ENCODE measurements at regions of chr12 and their contacts with region 1.

Region 1: GRCh38 chr12:55715833-55716581 is at the start of gene BLOC1S1:
- DNase-seq: peak; percentile 92
- H3K4me3 Mint-ChIP-seq: peak within 1 kb of the TSS; percentile 80
- H3K27ac Mint-ChIP-seq: peak within 1 kb of the TSS; percentile 79
- H3K4me1 Mint-ChIP-seq: peaks cover 31% of the 10 kb centered on the region
- H3K27me3 Mint-ChIP-seq: no peaks in the 10 kb centered on the region
- CTCF ChIP-seq: no peak
- total RNA-seq, gene BLOC1S1: 75.8 and 84.3 TPM in 2 replicates

Region 2: DNA sequence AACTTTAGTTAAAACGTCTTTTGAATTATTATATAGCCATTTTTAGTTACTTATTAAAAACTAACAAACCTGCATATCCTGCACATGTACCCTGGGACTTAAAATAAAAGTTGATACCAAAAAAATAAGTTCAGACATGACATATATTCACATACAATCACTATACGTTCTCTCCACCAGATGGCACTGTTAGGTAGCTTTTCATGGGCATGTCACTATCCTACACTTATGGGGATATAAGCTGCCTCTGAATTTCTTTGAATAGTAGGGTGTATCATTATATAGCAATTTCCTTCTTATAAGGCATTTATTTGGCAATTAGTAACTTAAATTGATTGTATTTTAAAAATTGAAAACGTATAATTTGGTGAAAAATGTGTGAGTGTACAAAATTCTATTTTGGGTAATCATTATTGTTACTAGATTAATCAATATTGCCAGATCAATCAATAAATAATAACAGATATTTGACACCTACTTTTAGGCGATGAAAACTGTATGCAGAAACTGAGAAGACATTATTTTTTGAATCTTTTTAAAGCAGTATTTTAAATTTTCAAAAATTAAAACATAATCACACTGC is 526.9 kb before region 1 on chr12:
- CTCF ChIA-PET with region 1: interaction called, 4 read pairs
- POLR2A ChIA-PET with region 1: no interaction called
- intact Hi-C with region 1: loop called (anchors 1 kb)
- DNase-seq: peak; percentile 79
- H3K4me3 Mint-ChIP-seq: no peak overlapping the region
- H3K27ac Mint-ChIP-seq: no peak overlapping the region
- H3K4me1 Mint-ChIP-seq: no peaks in the 10 kb centered on the region
- H3K27me3 Mint-ChIP-seq: peaks cover 71% of the 10 kb centered on the region
- CTCF ChIP-seq: peak; percentile 47

Region 3: DNA sequence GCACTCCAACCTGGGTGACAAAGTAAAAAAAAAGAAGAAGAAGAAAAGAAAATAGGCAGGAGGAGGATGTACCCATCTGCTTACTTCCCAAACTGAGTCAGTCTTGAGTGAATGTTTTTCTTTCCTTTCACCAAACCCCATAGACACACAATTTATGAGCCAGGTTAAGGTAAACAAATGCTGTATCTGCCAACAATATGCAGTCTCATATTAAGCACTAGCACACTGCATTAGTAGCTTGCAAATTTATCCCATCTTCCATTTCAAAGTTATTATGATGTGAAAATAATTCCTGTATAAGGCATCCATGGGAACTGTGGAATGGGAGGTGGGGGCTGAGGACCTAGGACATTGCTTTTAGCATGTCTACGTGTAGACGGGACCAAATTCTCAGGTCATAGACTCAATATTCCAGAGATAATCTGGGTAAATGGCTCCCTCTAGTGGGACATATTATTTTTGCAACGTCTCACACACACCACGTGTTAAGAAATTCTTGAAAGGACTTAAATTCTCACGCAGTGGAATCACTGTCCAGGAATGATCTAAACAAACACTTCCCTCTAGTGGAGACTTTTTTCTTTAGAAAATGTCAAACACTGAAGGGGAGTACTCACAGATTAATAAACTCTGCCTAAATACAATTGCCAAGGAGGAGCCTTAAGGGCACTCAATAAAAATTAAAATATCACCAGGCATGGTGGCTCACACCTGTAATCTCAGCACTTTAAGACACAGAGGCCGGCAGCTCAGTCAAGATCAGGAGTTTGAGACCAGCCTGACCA is 96.5 kb before region 1 on chr12:
- CTCF ChIA-PET with region 1: interaction called, 4 read pairs
- POLR2A ChIA-PET with region 1: interaction called, 3 read pairs
- intact Hi-C with region 1: loop called (anchors 2 kb)
- DNase-seq: peak; percentile 92
- H3K4me3 Mint-ChIP-seq: no peak overlapping the region
- H3K27ac Mint-ChIP-seq: no peak overlapping the region
- H3K4me1 Mint-ChIP-seq: no peaks in the 10 kb centered on the region
- H3K27me3 Mint-ChIP-seq: peaks cover 79% of the 10 kb centered on the region
- CTCF ChIP-seq: peak; percentile 69

Region 4: GRCh38 chr12:55642669-55643068 is 73.3 kb before region 1 on chr12:
- CTCF ChIA-PET with region 1: no interaction called
- POLR2A ChIA-PET with region 1: interaction called, 3 read pairs
- intact Hi-C with region 1: loop called (anchors 1 kb)
- DNase-seq: no peak
- H3K4me3 Mint-ChIP-seq: no peak overlapping the region
- H3K27ac Mint-ChIP-seq: no peak overlapping the region
- H3K4me1 Mint-ChIP-seq: no peaks in the 10 kb centered on the region
- H3K27me3 Mint-ChIP-seq: peaks cover 28% of the 10 kb centered on the region
- CTCF ChIP-seq: no peak

Region 5: GRCh38 chr12:55659486-55660385 is 56.3 kb before region 1 on chr12:
- CTCF ChIA-PET with region 1: interaction called, 4 read pairs
- POLR2A ChIA-PET with region 1: interaction called, 3 read pairs
- intact Hi-C with region 1: loop called (anchors 1 kb)
- DNase-seq: peak; percentile 30
- H3K4me3 Mint-ChIP-seq: no peak overlapping the region
- H3K27ac Mint-ChIP-seq: no peak overlapping the region
- H3K4me1 Mint-ChIP-seq: no peaks in the 10 kb centered on the region
- H3K27me3 Mint-ChIP-seq: peaks cover 43% of the 10 kb centered on the region
- CTCF ChIP-seq: peak; percentile 39

Region 6: GRCh38 chr12:55681142-55682077 is 34.6 kb before region 1 on chr12:
- CTCF ChIA-PET with region 1: interaction called, 3 read pairs
- POLR2A ChIA-PET with region 1: interaction called, 3 read pairs
- intact Hi-C with region 1: loop called (anchors 1 kb)
- DNase-seq: peak; percentile 75
- H3K4me3 Mint-ChIP-seq: no peak overlapping the region
- H3K27ac Mint-ChIP-seq: no peak overlapping the region
- H3K4me1 Mint-ChIP-seq: peaks cover 9% of the 10 kb centered on the region
- H3K27me3 Mint-ChIP-seq: peaks cover 25% of the 10 kb centered on the region
- CTCF ChIP-seq: peak; percentile 37

Region 7: DNA sequence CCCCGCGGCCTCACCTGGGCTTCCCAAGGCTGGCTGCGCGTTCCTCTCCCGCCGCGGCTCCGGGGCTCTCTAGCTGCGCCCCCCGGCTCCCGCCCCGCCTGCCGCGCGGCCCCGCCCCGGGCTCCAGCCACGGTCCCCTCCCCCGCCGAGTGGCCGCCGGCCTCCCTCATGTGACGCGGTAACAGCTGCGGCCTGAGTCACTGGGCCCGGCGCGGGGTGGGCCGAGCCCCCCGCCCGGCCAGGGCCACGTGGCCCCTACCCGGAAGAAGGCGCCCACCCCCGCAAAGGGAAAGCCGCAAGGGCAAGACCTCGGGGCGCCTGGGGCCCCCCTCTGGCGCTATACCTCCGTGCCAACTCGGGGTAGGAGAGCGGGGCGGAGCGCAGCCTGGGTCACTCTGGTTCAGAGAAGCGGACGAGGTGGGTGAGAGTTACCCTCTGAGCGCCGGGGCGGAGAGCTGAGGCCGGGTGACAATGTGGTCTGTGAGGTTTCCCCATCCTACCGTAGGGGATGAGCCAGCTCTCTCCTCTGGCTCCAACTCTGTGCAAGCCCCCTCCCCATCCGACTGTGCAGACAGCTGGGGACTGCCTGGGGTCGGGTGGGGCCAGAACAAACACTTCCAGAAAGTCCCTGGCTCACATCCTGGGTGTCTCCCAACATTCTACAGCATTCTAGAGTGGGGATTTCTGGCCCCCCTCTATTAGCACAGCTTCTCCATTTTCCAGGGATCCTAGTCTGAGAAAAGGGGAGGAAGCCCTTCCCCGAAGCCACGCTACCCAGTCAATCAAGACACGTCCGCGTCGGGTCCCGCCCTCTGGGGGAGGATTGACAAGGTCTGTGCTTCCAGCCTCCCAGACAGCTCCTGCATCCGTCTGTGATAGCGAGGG is 13.2 kb after region 1 on chr12 and contains the start of gene CD63:
- CTCF ChIA-PET with region 1: interaction called, 5 read pairs
- POLR2A ChIA-PET with region 1: interaction called, 25 read pairs
- intact Hi-C with region 1: no loop called
- DNase-seq: peak; percentile 93
- H3K4me3 Mint-ChIP-seq: peak within 1 kb of the TSS; percentile 76
- H3K27ac Mint-ChIP-seq: peak within 1 kb of the TSS; percentile 82
- H3K4me1 Mint-ChIP-seq: peaks cover 22% of the 10 kb centered on the region
- H3K27me3 Mint-ChIP-seq: no peaks in the 10 kb centered on the region
- CTCF ChIP-seq: no peak
- total RNA-seq, gene CD63: 552 and 724 TPM in 2 replicates

Region 8: DNA sequence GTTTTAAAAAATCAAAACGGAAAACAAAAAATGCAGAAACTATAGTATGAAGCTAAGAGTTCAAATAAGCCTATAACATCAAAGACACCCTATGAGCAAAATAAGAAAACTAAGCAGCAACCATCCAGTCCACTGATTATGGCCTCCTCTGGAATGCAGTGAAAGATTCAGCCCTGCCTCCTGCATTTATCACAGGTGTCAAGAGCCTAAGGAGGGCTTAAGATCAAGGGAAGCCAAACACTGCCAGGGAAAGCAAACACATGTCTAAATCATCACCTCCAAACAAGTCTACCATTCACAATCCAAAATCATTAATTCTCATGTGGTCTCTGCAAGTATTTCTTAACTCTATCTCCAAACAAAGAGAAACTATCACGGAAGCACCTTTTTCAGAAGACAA is 73.2 kb after region 1 on chr12:
- CTCF ChIA-PET with region 1: no interaction called
- POLR2A ChIA-PET with region 1: no interaction called
- intact Hi-C with region 1: no loop called
- DNase-seq: no peak
- H3K4me3 Mint-ChIP-seq: no peak overlapping the region
- H3K27ac Mint-ChIP-seq: no peak overlapping the region
- H3K4me1 Mint-ChIP-seq: no peaks in the 10 kb centered on the region
- H3K27me3 Mint-ChIP-seq: no peaks in the 10 kb centered on the region
- CTCF ChIP-seq: no peak